ENCODE measurements at regions of chr7 and their contacts with region 1.

Region 1: GRCh38 chr7:90261441-90261840 is 16.5 kb downstream of the CFAP69 start:
- DNase-seq: no peak
- H3K4me3 ChIP-seq: no peak overlapping the region
- H3K27ac ChIP-seq: no peak overlapping the region
- H3K4me1 ChIP-seq: no peaks in the 10 kb centered on the region
- H3K27me3 ChIP-seq: no peaks in the 10 kb centered on the region
- CTCF ChIP-seq: no peak
- EP300 ChIP-seq: no peak
- POLR2A ChIP-seq: no peak
- RAD21 ChIP-seq: no peak

Region 2: GRCh38 chr7:90250601-90251303 is 10.7 kb before region 1 on chr7:
- CTCF ChIA-PET with region 1: interaction called, 11 read pairs
- POLR2A ChIA-PET with region 1: no interaction called
- DNase-seq: no peak
- H3K4me3 ChIP-seq: no peak overlapping the region
- H3K27ac ChIP-seq: no peak overlapping the region
- H3K4me1 ChIP-seq: peaks cover 0 to 6% (median 3%) of the 10 kb centered on the region in 4 experiments; a peak in 4 of 7 replicates
- H3K27me3 ChIP-seq: peaks cover 0 to 6% (median 0%) of the 10 kb centered on the region in 4 experiments; a peak in 2 of 7 replicates
- CTCF ChIP-seq: no peak
- EP300 ChIP-seq: no peak
- POLR2A ChIP-seq: no peak
- RAD21 ChIP-seq: no peak

Region 3: DNA sequence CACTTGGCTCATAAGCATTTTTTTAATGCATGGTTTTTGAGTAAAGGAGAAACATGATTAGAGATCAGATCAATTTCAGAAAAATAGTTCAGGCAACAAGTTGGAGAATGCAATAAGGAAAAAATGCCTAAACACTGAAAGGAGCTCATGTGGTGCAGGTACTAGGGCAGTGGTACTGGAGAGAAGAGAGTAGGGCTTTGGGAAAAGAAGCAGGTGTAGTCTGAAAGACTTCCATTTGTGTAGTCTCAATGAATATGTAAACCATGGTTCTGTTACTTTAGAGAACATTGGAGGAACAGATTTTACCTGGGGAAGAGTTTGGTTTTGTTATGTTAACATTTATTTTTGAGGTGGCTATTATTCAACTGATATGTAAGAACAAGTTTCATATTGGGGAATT is 90.5 kb after region 1 on chr7:
- CTCF ChIA-PET with region 1: no interaction called
- POLR2A ChIA-PET with region 1: no interaction called
- DNase-seq: no peak
- H3K4me3 ChIP-seq: no peak overlapping the region
- H3K27ac ChIP-seq: no peak overlapping the region
- H3K4me1 ChIP-seq: no peaks in the 10 kb centered on the region
- H3K27me3 ChIP-seq: no peaks in the 10 kb centered on the region
- CTCF ChIP-seq: no peak
- EP300 ChIP-seq: no peak
- POLR2A ChIP-seq: no peak
- RAD21 ChIP-seq: no peak

Measured in H1 (cell line).